IMR-90 (cell line): ENCODE measurements at regions of chr22 and their contacts with region 1.

Region 1: GRCh38 chr22:24244101-24244787 is 638 bp downstream of the GGT5 start:
- DNase-seq: peak; percentile 52
- ATAC-seq: no peak
- H3K4me3 ChIP-seq: peak overlapping the region; percentile 13; the same call in 1 of the 2 replicates
- H3K27ac ChIP-seq: peak overlapping the region; percentile 89
- H3K4me1 ChIP-seq: peaks cover 39% of the 10 kb centered on the region
- H3K27me3 ChIP-seq: no peaks in the 10 kb centered on the region
- CTCF ChIP-seq: no peak
- POLR2A ChIP-seq: no peak
- RAD21 ChIP-seq: no peak

Region 2: DNA sequence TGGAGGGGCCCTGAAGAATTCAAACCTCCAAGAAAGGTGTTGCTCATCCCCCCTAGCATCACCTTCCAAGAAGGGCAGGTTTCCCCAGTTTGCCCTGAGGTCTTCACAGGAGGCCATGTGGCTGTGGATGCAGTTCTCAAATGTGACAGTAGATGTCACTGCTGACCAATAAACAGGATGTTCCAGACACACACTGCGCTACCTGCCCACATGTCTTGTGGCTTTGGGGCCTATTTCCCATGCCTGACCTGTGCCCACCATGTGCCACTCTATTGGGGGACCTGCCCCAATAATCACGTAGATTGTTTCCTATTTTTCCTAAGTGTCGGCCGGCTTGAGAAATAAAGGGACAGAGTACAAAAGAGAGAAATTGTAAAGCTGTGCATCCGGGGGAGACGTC is 259.8 kb before region 1 on chr22:
- CTCF ChIA-PET with region 1: no interaction called
- POLR2A ChIA-PET with region 1: no interaction called
- dilution Hi-C with region 1: no loop called
- in situ Hi-C with region 1: no loop called
- intact Hi-C with region 1: loop called (anchors 10 kb)
- DNase-seq: peak; percentile 38
- ATAC-seq: peak; percentile 55
- H3K4me3 ChIP-seq: no peak overlapping the region
- H3K27ac ChIP-seq: no peak overlapping the region
- H3K4me1 ChIP-seq: no peaks in the 10 kb centered on the region
- H3K27me3 ChIP-seq: no peaks in the 10 kb centered on the region
- CTCF ChIP-seq: peak; percentile 77
- POLR2A ChIP-seq: no peak
- RAD21 ChIP-seq: peak; percentile 86

Region 3: GRCh38 chr22:24189249-24190158 is 54.7 kb before region 1 on chr22:
- CTCF ChIA-PET with region 1: interaction called, 13 read pairs
- POLR2A ChIA-PET with region 1: no interaction called
- dilution Hi-C with region 1: no loop called
- in situ Hi-C with region 1: no loop called
- intact Hi-C with region 1: loop called (anchors 1 kb)
- DNase-seq: peak; percentile 50
- ATAC-seq: peak; percentile 100
- H3K4me3 ChIP-seq: no peak overlapping the region
- H3K27ac ChIP-seq: peak overlapping the region; percentile 16
- H3K4me1 ChIP-seq: peaks cover 10% of the 10 kb centered on the region
- H3K27me3 ChIP-seq: no peaks in the 10 kb centered on the region
- CTCF ChIP-seq: peak; percentile 98
- POLR2A ChIP-seq: peak; percentile 61; the same call in 1 of the 2 replicates
- RAD21 ChIP-seq: peak; percentile 99

Region 4: GRCh38 chr22:24198682-24199052 is 45.6 kb before region 1 on chr22:
- CTCF ChIA-PET with region 1: interaction called, 3 read pairs
- POLR2A ChIA-PET with region 1: no interaction called
- dilution Hi-C with region 1: no loop called
- in situ Hi-C with region 1: loop called (anchors 5 kb)
- intact Hi-C with region 1: no loop called
- DNase-seq: no peak
- ATAC-seq: peak; percentile 64
- H3K4me3 ChIP-seq: no peak overlapping the region
- H3K27ac ChIP-seq: no peak overlapping the region
- H3K4me1 ChIP-seq: peaks cover 4% of the 10 kb centered on the region
- H3K27me3 ChIP-seq: no peaks in the 10 kb centered on the region
- CTCF ChIP-seq: no peak
- POLR2A ChIP-seq: no peak
- RAD21 ChIP-seq: no peak

Region 5: DNA sequence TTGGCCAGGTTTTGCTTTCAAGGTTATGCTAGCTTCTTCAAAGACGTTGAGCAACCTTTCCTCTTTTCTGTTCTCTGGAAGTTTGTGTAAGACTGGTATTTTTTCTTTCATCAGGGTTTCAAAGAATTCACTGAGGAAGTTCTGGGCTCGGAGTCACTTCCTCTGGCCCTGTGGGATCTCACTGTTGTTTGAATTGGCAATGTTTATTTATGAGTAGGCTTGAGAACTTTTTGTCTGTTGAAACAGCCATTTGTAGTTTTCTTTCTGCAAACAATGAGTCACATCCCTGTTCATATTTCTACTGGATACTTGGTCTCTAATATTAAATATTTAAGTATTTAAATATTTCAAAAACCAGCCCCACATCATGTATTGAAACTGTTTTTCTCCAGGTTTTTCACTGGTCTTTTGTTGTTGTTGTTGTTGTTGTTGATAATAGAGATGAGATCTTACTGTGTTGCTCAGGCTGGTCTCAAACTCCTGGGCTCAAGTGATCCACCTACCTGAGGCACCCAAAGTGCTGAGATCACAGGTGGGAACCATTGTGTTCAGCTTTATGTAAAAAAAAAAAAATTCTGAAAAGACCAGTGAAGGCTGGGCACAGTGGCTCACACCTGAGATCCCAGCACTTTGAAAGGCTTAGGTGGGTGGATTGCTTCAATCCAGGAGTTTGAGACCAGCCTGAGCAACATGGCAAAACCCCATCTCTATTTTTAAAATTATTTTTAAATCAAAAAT is 36.1 kb before region 1 on chr22:
- CTCF ChIA-PET with region 1: interaction called, 3 read pairs
- POLR2A ChIA-PET with region 1: interaction called, 6 read pairs
- dilution Hi-C with region 1: no loop called
- in situ Hi-C with region 1: no loop called
- intact Hi-C with region 1: loop called (anchors 5 kb)
- DNase-seq: peak; percentile 98
- ATAC-seq: peak; percentile 82
- H3K4me3 ChIP-seq: no peak overlapping the region
- H3K27ac ChIP-seq: peak overlapping the region; percentile 96
- H3K4me1 ChIP-seq: peaks cover 24% of the 10 kb centered on the region
- H3K27me3 ChIP-seq: no peaks in the 10 kb centered on the region
- CTCF ChIP-seq: no peak
- POLR2A ChIP-seq: no peak
- RAD21 ChIP-seq: no peak

Region 6: GRCh38 chr22:24305260-24305692 is 61.0 kb after region 1 on chr22:
- CTCF ChIA-PET with region 1: no interaction called
- POLR2A ChIA-PET with region 1: no interaction called
- dilution Hi-C with region 1: no loop called
- in situ Hi-C with region 1: no loop called
- intact Hi-C with region 1: no loop called
- DNase-seq: peak; percentile 4
- ATAC-seq: no peak
- H3K4me3 ChIP-seq: no peak overlapping the region
- H3K27ac ChIP-seq: no peak overlapping the region
- H3K4me1 ChIP-seq: peaks cover 4% of the 10 kb centered on the region; the same call in 1 of the 2 replicates
- H3K27me3 ChIP-seq: no peaks in the 10 kb centered on the region
- CTCF ChIP-seq: no peak
- POLR2A ChIP-seq: no peak
- RAD21 ChIP-seq: no peak